ENCODE measurements at regions of chr5 and their contacts with region 1.

Region 1: GRCh38 chr5:90866333-90866732 is 307.7 kb downstream of the ADGRV1 start:
- DNase-seq: peak; percentile 29
- H3K4me3 Mint-ChIP-seq: no peak overlapping the region
- H3K27ac Mint-ChIP-seq: no peak overlapping the region
- H3K4me1 Mint-ChIP-seq: no peaks in the 10 kb centered on the region
- H3K27me3 Mint-ChIP-seq: no peaks in the 10 kb centered on the region
- CTCF ChIP-seq: peak; percentile 39

Region 2: GRCh38 chr5:90562341-90562740 is 304.0 kb before region 1 on chr5:
- CTCF ChIA-PET with region 1: no interaction called
- POLR2A ChIA-PET with region 1: no interaction called
- intact Hi-C with region 1: no loop called
- DNase-seq: no peak
- H3K4me3 Mint-ChIP-seq: no peak overlapping the region
- H3K27ac Mint-ChIP-seq: no peak overlapping the region
- H3K4me1 Mint-ChIP-seq: peaks cover 9% of the 10 kb centered on the region
- H3K27me3 Mint-ChIP-seq: peaks cover 96% of the 10 kb centered on the region
- CTCF ChIP-seq: no peak

Region 3: DNA sequence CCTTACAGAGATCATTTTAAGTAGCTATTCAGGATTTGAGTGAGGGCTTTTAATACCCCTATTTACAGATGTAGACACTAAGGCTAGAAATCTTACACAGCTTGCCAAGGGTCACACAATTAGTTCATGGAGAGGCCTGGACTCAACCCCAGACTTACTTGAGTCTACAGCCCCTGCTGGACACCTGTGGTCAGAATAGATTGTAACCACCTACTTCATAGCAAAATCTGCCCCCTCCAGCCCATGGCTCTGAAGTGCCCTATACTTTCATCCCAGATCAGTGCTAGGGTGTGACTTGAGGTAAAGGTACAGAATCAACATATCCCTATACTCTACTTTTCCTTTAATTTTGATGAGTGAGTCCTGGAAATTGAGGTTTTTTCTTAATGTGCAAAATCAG is 16.4 kb before region 1 on chr5:
- CTCF ChIA-PET with region 1: interaction called, 15 read pairs
- POLR2A ChIA-PET with region 1: no interaction called
- intact Hi-C with region 1: no loop called
- DNase-seq: no peak
- H3K4me3 Mint-ChIP-seq: no peak overlapping the region
- H3K27ac Mint-ChIP-seq: no peak overlapping the region
- H3K4me1 Mint-ChIP-seq: peaks cover 1% of the 10 kb centered on the region
- H3K27me3 Mint-ChIP-seq: no peaks in the 10 kb centered on the region
- CTCF ChIP-seq: no peak

Region 4: GRCh38 chr5:90855296-90856010 is 10.9 kb before region 1 on chr5:
- CTCF ChIA-PET with region 1: interaction called, 15 read pairs
- POLR2A ChIA-PET with region 1: interaction called, 3 read pairs
- intact Hi-C with region 1: no loop called
- DNase-seq: no peak
- H3K4me3 Mint-ChIP-seq: no peak overlapping the region
- H3K27ac Mint-ChIP-seq: no peak overlapping the region
- H3K4me1 Mint-ChIP-seq: peaks cover 6% of the 10 kb centered on the region
- H3K27me3 Mint-ChIP-seq: no peaks in the 10 kb centered on the region
- CTCF ChIP-seq: no peak

Region 5: GRCh38 chr5:90878549-90879196 is 12.3 kb after region 1 on chr5:
- CTCF ChIA-PET with region 1: interaction called, 14 read pairs
- POLR2A ChIA-PET with region 1: no interaction called
- intact Hi-C with region 1: no loop called
- DNase-seq: peak; percentile 23
- H3K4me3 Mint-ChIP-seq: no peak overlapping the region
- H3K27ac Mint-ChIP-seq: no peak overlapping the region
- H3K4me1 Mint-ChIP-seq: peaks cover 6% of the 10 kb centered on the region
- H3K27me3 Mint-ChIP-seq: no peaks in the 10 kb centered on the region
- CTCF ChIP-seq: no peak

Region 6: GRCh38 chr5:91101600-91102379 is 235.5 kb after region 1 on chr5:
- CTCF ChIA-PET with region 1: interaction called, 7 read pairs
- POLR2A ChIA-PET with region 1: interaction called, 3 read pairs
- intact Hi-C with region 1: loop called (anchors 1 kb)
- DNase-seq: peak; percentile 83
- H3K4me3 Mint-ChIP-seq: no peak overlapping the region
- H3K27ac Mint-ChIP-seq: no peak overlapping the region
- H3K4me1 Mint-ChIP-seq: peaks cover 25% of the 10 kb centered on the region
- H3K27me3 Mint-ChIP-seq: no peaks in the 10 kb centered on the region
- CTCF ChIP-seq: peak; percentile 87

Region 7: GRCh38 chr5:91219803-91220371 is 353.6 kb after region 1 on chr5:
- CTCF ChIA-PET with region 1: interaction called, 8 read pairs
- POLR2A ChIA-PET with region 1: no interaction called
- intact Hi-C with region 1: loop called (anchors 2 kb)
- DNase-seq: peak; percentile 22
- H3K4me3 Mint-ChIP-seq: no peak overlapping the region
- H3K27ac Mint-ChIP-seq: no peak overlapping the region
- H3K4me1 Mint-ChIP-seq: peaks cover 18% of the 10 kb centered on the region
- H3K27me3 Mint-ChIP-seq: no peaks in the 10 kb centered on the region
- CTCF ChIP-seq: no peak

Region 8: GRCh38 chr5:91225848-91226686 is 359.7 kb after region 1 on chr5:
- CTCF ChIA-PET with region 1: interaction called, 14 read pairs
- POLR2A ChIA-PET with region 1: no interaction called
- intact Hi-C with region 1: no loop called
- DNase-seq: peak; percentile 70
- H3K4me3 Mint-ChIP-seq: no peak overlapping the region
- H3K27ac Mint-ChIP-seq: no peak overlapping the region
- H3K4me1 Mint-ChIP-seq: peaks cover 22% of the 10 kb centered on the region
- H3K27me3 Mint-ChIP-seq: no peaks in the 10 kb centered on the region
- CTCF ChIP-seq: peak; percentile 65

Measured in MCF 10A (cell line).